ENCODE measurements at regions of chr2 and their contacts with region 1.

Region 1: DNA sequence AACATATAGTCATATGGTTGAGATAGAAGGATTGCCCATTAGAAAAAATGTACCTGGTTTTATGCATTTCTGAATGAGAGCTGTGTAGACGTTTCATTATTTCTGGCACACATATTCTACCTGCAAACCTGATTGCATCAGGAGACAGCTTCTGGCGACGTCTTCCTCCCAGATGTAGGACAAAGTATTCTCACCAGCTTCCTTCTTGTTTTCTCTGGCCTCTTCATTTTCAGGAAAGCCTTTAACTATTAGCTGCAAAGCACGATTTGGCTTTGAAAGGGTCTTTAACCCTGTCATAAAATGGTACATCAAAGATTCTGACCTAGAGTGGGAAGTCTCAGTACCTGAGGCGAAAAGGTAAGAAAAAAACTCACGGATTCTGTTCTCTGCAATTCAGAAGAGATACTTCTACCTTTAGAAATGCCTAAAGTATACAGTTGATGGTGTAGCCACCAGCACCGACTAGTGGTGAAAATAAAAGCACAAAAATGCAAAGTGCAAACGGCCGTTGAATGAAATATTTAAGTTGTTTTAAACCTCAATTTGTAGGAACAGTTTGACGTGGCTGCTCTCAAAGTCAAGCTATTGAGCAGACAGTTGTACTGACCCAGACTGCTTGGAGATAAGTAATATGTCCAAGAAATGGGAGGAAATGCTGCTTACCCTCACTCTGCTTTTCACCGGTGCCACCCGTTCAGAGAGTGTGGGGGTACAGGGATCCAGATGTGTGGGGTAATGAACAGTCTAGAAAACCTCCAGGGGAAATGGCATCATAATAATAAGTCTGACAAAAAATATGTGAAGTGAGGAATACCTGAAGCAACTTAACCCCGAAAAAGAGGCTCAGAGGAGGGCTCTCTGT is 20.2 kb downstream of the IL18RAP start:
- DNase-seq: peak; percentile 67

Region 2: GRCh38 chr2:102020596-102021181 is 422.5 kb before region 1 on chr2:
- in situ Hi-C with region 1: loop called (anchors 25 kb)
- DNase-seq: peak; percentile 88

Region 3: GRCh38 chr2:102251042-102251848 is 192.0 kb before region 1 on chr2:
- in situ Hi-C with region 1: loop called (anchors 10 kb)
- DNase-seq: no peak

Measured in KBM-7 (cell line).